ENCODE measurements at regions of chr14 and their contacts with region 1.

Region 1: GRCh38 chr14:75514673-75515628 is 7.3 kb upstream of the BATF start:
- DNase-seq: peak; percentile 80
- ATAC-seq: peak; percentile 76
- H3K4me3 ChIP-seq: peak overlapping the region; percentile 73
- H3K27ac ChIP-seq: peak overlapping the region; percentile 97
- H3K4me1 ChIP-seq: peaks cover 54% of the 10 kb centered on the region
- H3K27me3 ChIP-seq: no peaks in the 10 kb centered on the region
- CTCF ChIP-seq: no peak
- EP300 ChIP-seq: peak in 1 of 2 experiments; percentile 73; a peak in 3 of 4 replicates
- POLR2A ChIP-seq: 0 out of 2 replicates have a peak, but pooled peaks have one; percentile 36
- RAD21 ChIP-seq: no peak

Region 2: DNA sequence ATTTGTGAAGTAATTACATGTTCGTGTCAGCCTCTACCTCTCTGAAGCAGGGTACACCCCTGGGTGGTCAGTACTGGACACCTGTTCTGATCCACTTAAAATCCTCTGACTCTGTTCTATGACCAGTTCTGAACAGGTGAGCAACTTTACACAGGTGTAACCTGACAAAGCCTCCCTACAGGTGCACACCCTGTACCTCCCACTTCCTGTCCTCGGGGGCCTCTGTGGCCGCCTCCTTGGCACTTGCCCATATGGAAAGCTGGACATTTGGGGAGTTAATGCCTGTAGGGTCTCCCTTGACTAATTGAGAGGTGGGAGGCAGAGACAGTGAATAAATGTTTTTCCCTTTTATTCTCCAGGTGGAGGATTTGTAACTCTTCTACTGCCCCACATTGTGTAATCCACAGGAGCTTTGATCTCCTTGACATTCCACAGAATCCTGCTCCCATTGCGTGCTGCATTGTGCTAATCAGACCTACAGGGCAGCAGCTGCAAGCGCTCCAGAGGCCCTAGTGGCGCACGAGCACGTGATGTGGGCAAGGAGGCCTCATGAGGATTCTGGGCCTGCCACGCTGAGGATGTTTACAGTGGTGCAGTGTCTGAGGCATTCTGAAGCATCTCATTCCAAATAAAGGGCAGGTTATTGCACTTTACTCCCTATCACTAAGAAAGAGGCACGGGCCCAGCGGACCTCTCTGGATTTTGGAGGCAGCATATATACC is 38.5 kb before region 1 on chr14:
- CTCF ChIA-PET with region 1: interaction called, 16 read pairs
- POLR2A ChIA-PET with region 1: no interaction called
- RAD21 ChIA-PET with region 1: interaction called, 14 read pairs
- SMC1A ChIA-PET with region 1: interaction called, 8 read pairs
- in situ Hi-C with region 1: no loop called
- intact Hi-C with region 1: no loop called
- DNase-seq: no peak
- ATAC-seq: no peak
- H3K4me3 ChIP-seq: no peak overlapping the region
- H3K27ac ChIP-seq: no peak overlapping the region
- H3K4me1 ChIP-seq: peaks cover 29% of the 10 kb centered on the region
- H3K27me3 ChIP-seq: no peaks in the 10 kb centered on the region
- CTCF ChIP-seq: no peak
- EP300 ChIP-seq: no peak
- POLR2A ChIP-seq: no peak
- RAD21 ChIP-seq: no peak

Region 3: GRCh38 chr14:75531660-75532317 is 16.8 kb after region 1 on chr14:
- CTCF ChIA-PET with region 1: interaction called, 481 read pairs
- POLR2A ChIA-PET with region 1: interaction called, 9 read pairs
- RAD21 ChIA-PET with region 1: interaction called, 419 read pairs
- SMC1A ChIA-PET with region 1: interaction called, 487 read pairs
- in situ Hi-C with region 1: no loop called
- intact Hi-C with region 1: no loop called
- DNase-seq: no peak
- ATAC-seq: no peak
- H3K4me3 ChIP-seq: no peak overlapping the region
- H3K27ac ChIP-seq: no peak overlapping the region
- H3K4me1 ChIP-seq: peaks cover 19% of the 10 kb centered on the region
- H3K27me3 ChIP-seq: no peaks in the 10 kb centered on the region
- CTCF ChIP-seq: no peak
- EP300 ChIP-seq: no peak
- POLR2A ChIP-seq: no peak
- RAD21 ChIP-seq: no peak

Region 4: GRCh38 chr14:75549169-75549568 is 34.2 kb after region 1 on chr14:
- CTCF ChIA-PET with region 1: interaction called, 481 read pairs
- POLR2A ChIA-PET with region 1: interaction called, 262 read pairs
- RAD21 ChIA-PET with region 1: interaction called, 419 read pairs
- SMC1A ChIA-PET with region 1: interaction called, 487 read pairs
- in situ Hi-C with region 1: no loop called
- intact Hi-C with region 1: no loop called
- DNase-seq: peak; percentile 79
- ATAC-seq: peak; percentile 87
- H3K4me3 ChIP-seq: no peak overlapping the region; the same call in 1 of the 2 replicates
- H3K27ac ChIP-seq: peak overlapping the region; percentile 53
- H3K4me1 ChIP-seq: peaks cover 23% of the 10 kb centered on the region
- H3K27me3 ChIP-seq: no peaks in the 10 kb centered on the region
- CTCF ChIP-seq: no peak
- EP300 ChIP-seq: peak in 1 of 2 experiments; percentile 49; a peak in 1 of 4 replicates
- POLR2A ChIP-seq: no peak
- RAD21 ChIP-seq: peak; percentile 7; the same call in 1 of the 2 replicates

Region 5: GRCh38 chr14:75654127-75654732 is 139.3 kb after region 1 on chr14:
- CTCF ChIA-PET with region 1: interaction called, 52 read pairs
- POLR2A ChIA-PET with region 1: interaction called, 6 read pairs
- RAD21 ChIA-PET with region 1: interaction called, 13 read pairs
- SMC1A ChIA-PET with region 1: interaction called, 145 read pairs
- in situ Hi-C with region 1: no loop called
- intact Hi-C with region 1: no loop called
- DNase-seq: peak; percentile 38
- ATAC-seq: peak; percentile 98
- H3K4me3 ChIP-seq: no peak overlapping the region
- H3K27ac ChIP-seq: no peak overlapping the region
- H3K4me1 ChIP-seq: no peaks in the 10 kb centered on the region
- H3K27me3 ChIP-seq: no peaks in the 10 kb centered on the region
- CTCF ChIP-seq: peak; percentile 97 to 98 (median 97)
- EP300 ChIP-seq: no peak
- POLR2A ChIP-seq: no peak
- RAD21 ChIP-seq: peak; percentile 97

Region 6: GRCh38 chr14:76761136-76761959 is 1246.4 kb after region 1 on chr14 and contains the start of gene VASH1:
- CTCF ChIA-PET with region 1: no interaction called
- POLR2A ChIA-PET with region 1: no interaction called
- RAD21 ChIA-PET with region 1: no interaction called
- SMC1A ChIA-PET with region 1: no interaction called
- in situ Hi-C with region 1: no loop called
- intact Hi-C with region 1: no loop called
- DNase-seq: no peak
- ATAC-seq: peak; percentile 95
- H3K4me3 ChIP-seq: peak within 1 kb of the TSS; percentile 71
- H3K27ac ChIP-seq: no peak within 1 kb of the TSS
- H3K4me1 ChIP-seq: no peaks in the 10 kb centered on the region; the same call in 1 of the 2 replicates
- H3K27me3 ChIP-seq: peaks cover 2 to 7% of the 10 kb centered on the region in 2 experiments
- CTCF ChIP-seq: no peak
- EP300 ChIP-seq: no peak
- POLR2A ChIP-seq: peak; percentile 35; the same call in 1 of the 2 replicates
- RAD21 ChIP-seq: no peak
- polyA plus RNA-seq, gene VASH1: 0.06 to 0.35 TPM